ENCODE measurements at regions of chr14 and their contacts with region 1.

Region 1: DNA sequence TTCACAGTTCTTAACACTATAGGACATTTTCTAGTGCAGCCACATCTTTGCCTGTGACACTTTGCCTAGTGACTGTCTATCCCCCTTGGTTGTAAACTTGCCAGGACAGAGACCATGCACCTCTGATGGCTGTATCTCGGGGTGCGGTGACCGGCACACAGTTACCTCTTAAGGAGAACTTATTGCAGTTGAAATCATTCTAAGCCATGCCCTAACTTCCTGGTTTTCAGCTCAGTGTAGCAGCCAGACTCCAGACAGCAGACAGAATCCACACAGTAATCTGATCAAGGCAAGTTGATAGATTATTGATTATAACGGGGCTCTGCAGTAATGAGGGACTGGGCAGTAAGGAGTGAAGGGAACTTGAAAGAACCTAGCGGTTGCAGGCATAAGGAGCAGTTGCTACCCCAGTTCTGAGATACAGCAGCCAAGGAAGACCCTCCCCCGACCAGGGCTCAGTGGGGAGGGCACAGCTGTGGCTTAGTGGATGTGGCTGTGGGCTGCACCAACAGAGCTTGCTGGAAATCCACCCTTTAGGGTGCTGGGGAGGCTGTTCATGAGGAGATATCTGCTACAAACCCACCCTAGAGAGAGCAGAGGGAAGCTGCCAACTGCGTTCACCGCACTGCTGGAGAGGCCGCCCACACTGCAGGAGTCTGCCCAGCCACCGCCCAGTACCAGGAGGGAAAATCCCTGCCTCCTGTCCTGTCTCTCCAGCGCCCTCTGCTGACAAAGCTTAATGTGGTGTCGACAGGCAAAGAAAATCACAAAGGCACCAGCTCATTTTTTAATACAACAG is 58.2 kb upstream of the BEGAIN start:
- DNase-seq: peak; percentile 77 to 85 (median 80)
- H3K4me3 ChIP-seq: peak overlapping the region in 1 of 2 donors; percentile 27
- H3K4me3 Mint-ChIP-seq: peak overlapping the region in 7 of 8 donors; percentile 10 to 74 (median 64)
- H3K27ac ChIP-seq: no peak overlapping the region
- H3K27ac Mint-ChIP-seq: peak overlapping the region; percentile 9 to 83 (median 68)
- H3K4me1 ChIP-seq: peaks cover 43% of the 10 kb centered on the region
- H3K4me1 Mint-ChIP-seq: peaks cover 34 to 55% (median 48%) of the 10 kb centered on the region in 4 donors
- H3K27me3 ChIP-seq: no peaks in the 10 kb centered on the region
- H3K27me3 Mint-ChIP-seq: no peaks in the 10 kb centered on the region

Region 2: DNA sequence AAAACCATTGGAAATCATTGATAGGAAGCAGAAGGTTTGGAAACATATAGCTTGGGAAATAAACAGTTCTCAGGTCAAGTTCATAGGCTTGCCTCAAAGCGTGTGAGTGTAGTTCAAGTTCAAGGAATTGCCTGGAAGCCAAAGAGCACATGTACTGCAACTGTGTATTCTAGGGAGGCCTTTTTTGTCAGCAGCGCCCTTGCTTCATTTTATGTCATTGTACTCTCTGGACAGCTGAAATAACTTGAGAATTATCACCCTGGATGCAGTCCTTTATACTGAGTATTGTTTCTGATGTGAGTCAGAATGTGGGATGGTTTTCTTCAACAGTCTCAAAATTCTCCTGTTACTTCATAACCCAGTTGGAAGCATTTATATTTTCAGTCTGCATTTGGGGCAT is 596.2 kb before region 1 on chr14:
- CTCF ChIA-PET with region 1: no interaction called
- POLR2A ChIA-PET with region 1: no interaction called
- intact Hi-C with region 1: no loop called
- DNase-seq: no peak
- H3K4me3 ChIP-seq: no peak overlapping the region
- H3K4me3 Mint-ChIP-seq: no peak overlapping the region
- H3K27ac ChIP-seq: no peak overlapping the region
- H3K27ac Mint-ChIP-seq: peak overlapping the region in 1 of 7 donors; percentile 19
- H3K4me1 ChIP-seq: no peaks in the 10 kb centered on the region
- H3K4me1 Mint-ChIP-seq: peaks cover 4 to 13% (median 7%) of the 10 kb centered on the region in 4 donors
- H3K27me3 ChIP-seq: no peaks in the 10 kb centered on the region
- H3K27me3 Mint-ChIP-seq: no peaks in the 10 kb centered on the region

Region 3: DNA sequence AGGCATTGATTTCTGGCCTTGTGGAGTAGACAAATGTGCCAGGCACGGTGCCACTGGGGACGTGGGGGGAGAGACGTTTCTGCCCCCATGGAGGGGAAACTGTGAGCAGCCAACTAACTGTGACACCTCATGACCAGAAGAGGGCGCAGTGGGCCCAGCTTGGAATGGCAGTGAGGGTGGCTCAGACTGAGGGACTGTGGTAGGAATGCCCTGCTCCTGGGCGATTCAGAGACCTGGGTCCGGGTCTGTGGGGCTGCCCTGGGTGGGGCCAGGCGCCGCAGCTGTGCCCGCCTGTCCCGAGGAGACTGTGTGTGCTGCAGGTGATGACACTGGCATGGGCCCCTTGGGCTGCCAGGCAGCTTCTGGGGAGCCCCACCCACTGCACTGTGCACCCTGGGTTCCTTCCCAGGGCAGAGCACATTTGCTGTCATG is 261.6 kb before region 1 on chr14:
- CTCF ChIA-PET with region 1: interaction called, 277 read pairs
- POLR2A ChIA-PET with region 1: interaction called, 35 read pairs
- intact Hi-C with region 1: loop called (anchors 1 kb)
- DNase-seq: peak; percentile 55 to 67 (median 63)
- H3K4me3 ChIP-seq: no peak overlapping the region
- H3K4me3 Mint-ChIP-seq: no peak overlapping the region
- H3K27ac ChIP-seq: no peak overlapping the region
- H3K27ac Mint-ChIP-seq: peak overlapping the region in 1 of 7 donors; percentile 17
- H3K4me1 ChIP-seq: no peaks in the 10 kb centered on the region
- H3K4me1 Mint-ChIP-seq: peaks cover 6 to 12% (median 8%) of the 10 kb centered on the region in 4 donors
- H3K27me3 ChIP-seq: no peaks in the 10 kb centered on the region
- H3K27me3 Mint-ChIP-seq: no peaks in the 10 kb centered on the region

Region 4: GRCh38 chr14:100440187-100440631 is 205.2 kb before region 1 on chr14:
- CTCF ChIA-PET with region 1: interaction called, 58 read pairs
- POLR2A ChIA-PET with region 1: no interaction called
- intact Hi-C with region 1: no loop called
- DNase-seq: peak in 2 of 5 donors; percentile 30
- H3K4me3 ChIP-seq: no peak overlapping the region
- H3K4me3 Mint-ChIP-seq: no peak overlapping the region
- H3K27ac ChIP-seq: no peak overlapping the region
- H3K27ac Mint-ChIP-seq: no peak overlapping the region
- H3K4me1 ChIP-seq: peaks cover 7% of the 10 kb centered on the region
- H3K4me1 Mint-ChIP-seq: peaks cover 0 to 11% (median 8%) of the 10 kb centered on the region in 4 donors
- H3K27me3 ChIP-seq: no peaks in the 10 kb centered on the region
- H3K27me3 Mint-ChIP-seq: no peaks in the 10 kb centered on the region

Region 5: DNA sequence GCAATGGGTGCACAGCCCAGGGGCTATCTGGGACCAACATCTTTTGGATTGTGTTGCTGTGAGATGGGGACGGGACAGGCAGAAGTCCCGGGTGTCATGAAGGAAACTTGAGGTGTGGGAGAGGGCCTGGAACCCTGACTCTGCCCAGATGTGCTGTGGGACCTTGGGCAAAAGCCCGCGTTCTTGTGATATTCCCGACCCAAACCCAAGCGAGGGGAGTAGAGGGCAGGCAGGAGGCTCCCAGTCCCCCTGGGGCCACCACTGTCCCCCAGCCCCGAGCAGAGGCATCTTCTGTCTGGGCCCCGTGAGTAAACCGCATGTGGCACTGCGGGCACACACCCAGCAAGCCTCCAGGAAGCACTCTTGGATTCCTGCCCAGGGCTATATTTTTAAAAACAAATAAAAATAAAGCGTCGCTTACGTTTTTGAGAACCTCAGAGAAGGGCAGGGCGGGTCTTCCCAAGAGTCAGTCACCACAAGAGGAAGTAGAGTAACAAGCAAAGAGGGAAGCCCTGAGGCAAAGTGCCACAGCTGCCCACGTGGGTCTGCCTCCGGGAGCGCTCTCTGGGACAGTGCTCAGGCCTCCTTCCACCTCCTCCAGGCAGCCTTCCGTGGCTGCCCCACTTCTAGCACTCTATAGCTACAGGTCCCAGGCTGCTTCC is 97.6 kb before region 1 on chr14:
- CTCF ChIA-PET with region 1: interaction called, 52 read pairs
- POLR2A ChIA-PET with region 1: interaction called, 40 read pairs
- intact Hi-C with region 1: loop called (anchors 2 kb)
- DNase-seq: peak; percentile 29 to 90 (median 79)
- H3K4me3 ChIP-seq: no peak overlapping the region
- H3K4me3 Mint-ChIP-seq: peak overlapping the region; percentile 44 to 85 (median 82)
- H3K27ac ChIP-seq: peak overlapping the region; percentile 59
- H3K27ac Mint-ChIP-seq: peak overlapping the region; percentile 32 to 95 (median 91)
- H3K4me1 ChIP-seq: peaks cover 41% of the 10 kb centered on the region
- H3K4me1 Mint-ChIP-seq: peaks cover 9 to 49% (median 18%) of the 10 kb centered on the region in 4 donors
- H3K27me3 ChIP-seq: no peaks in the 10 kb centered on the region
- H3K27me3 Mint-ChIP-seq: no peaks in the 10 kb centered on the region

Region 6: GRCh38 chr14:100617410-100618317 is 27.7 kb before region 1 on chr14:
- CTCF ChIA-PET with region 1: interaction called, 17 read pairs
- POLR2A ChIA-PET with region 1: interaction called, 3 read pairs
- intact Hi-C with region 1: no loop called
- DNase-seq: peak in 4 of 5 donors; percentile 48 to 51 (median 50)
- H3K4me3 ChIP-seq: no peak overlapping the region
- H3K4me3 Mint-ChIP-seq: peak overlapping the region; percentile 13 to 82 (median 62)
- H3K27ac ChIP-seq: no peak overlapping the region
- H3K27ac Mint-ChIP-seq: peak overlapping the region; percentile 57 to 93 (median 76)
- H3K4me1 ChIP-seq: peaks cover 20% of the 10 kb centered on the region
- H3K4me1 Mint-ChIP-seq: peaks cover 9 to 29% (median 15%) of the 10 kb centered on the region in 4 donors
- H3K27me3 ChIP-seq: no peaks in the 10 kb centered on the region
- H3K27me3 Mint-ChIP-seq: no peaks in the 10 kb centered on the region

Region 7: GRCh38 chr14:100736234-100737180 is 91.1 kb after region 1 on chr14:
- CTCF ChIA-PET with region 1: no interaction called
- POLR2A ChIA-PET with region 1: no interaction called
- intact Hi-C with region 1: no loop called
- DNase-seq: no peak
- H3K4me3 ChIP-seq: no peak overlapping the region
- H3K4me3 Mint-ChIP-seq: no peak overlapping the region
- H3K27ac ChIP-seq: no peak overlapping the region
- H3K27ac Mint-ChIP-seq: no peak overlapping the region
- H3K4me1 ChIP-seq: no peaks in the 10 kb centered on the region
- H3K4me1 Mint-ChIP-seq: no peaks in the 10 kb centered on the region
- H3K27me3 ChIP-seq: no peaks in the 10 kb centered on the region
- H3K27me3 Mint-ChIP-seq: peaks cover 0 to 7% of the 10 kb centered on the region in 2 donors

Measured in CD4-positive, alpha-beta memory T cell (primary cell).